ENCODE measurements at regions of chr16 and their contacts with region 1.

Region 1: GRCh38 chr16:30844671-30845449 is 49.0 kb downstream of the BCL7C start:
- DNase-seq: peak; percentile 69
- H3K27ac ChIP-seq: peak overlapping the region; percentile 3; the same call in 1 of the 2 replicates
- CTCF ChIP-seq: peak; percentile 86

Region 2: GRCh38 chr16:30761928-30762810 is 82.7 kb before region 1 on chr16 and contains the starts of genes CFAP119 and RNF40:
- CTCF ChIA-PET with region 1: no interaction called
- POLR2A ChIA-PET with region 1: no interaction called
- DNase-seq: peak; percentile 100
- H3K27ac ChIP-seq: peak within 1 kb of the TSS; percentile 83
- CTCF ChIP-seq: no peak

Region 3: GRCh38 chr16:30813821-30814189 is 31.1 kb before region 1 on chr16:
- CTCF ChIA-PET with region 1: interaction called, 10 read pairs
- POLR2A ChIA-PET with region 1: interaction called, 6 read pairs
- DNase-seq: no peak
- H3K27ac ChIP-seq: peak overlapping the region; percentile 82
- CTCF ChIP-seq: no peak

Region 4: GRCh38 chr16:30874821-30875717 is 30.2 kb after region 1 on chr16:
- CTCF ChIA-PET with region 1: interaction called, 11 read pairs
- POLR2A ChIA-PET with region 1: interaction called, 6 read pairs
- DNase-seq: peak; percentile 79
- H3K27ac ChIP-seq: peak overlapping the region; percentile 88
- CTCF ChIP-seq: no peak

Region 5: DNA sequence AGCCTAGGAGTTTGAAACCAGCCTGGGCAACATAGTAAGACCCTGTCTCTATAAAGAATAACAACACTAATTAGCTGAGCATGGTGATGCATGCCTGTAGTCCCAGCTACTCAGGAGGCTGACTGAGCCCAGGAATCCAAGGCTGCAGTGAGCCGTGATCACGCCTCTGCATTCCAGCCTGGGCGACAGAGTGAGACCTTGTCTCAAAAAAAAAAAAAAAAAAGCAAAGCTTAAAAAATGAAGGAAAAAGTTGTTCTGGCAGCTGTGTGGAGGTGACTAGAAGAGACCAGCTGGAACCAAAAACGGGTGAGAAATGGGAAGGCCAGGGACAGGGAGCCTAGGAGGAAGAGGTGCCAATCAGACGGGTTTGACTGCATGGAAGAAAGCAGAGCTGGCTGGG is 44.9 kb after region 1 on chr16:
- CTCF ChIA-PET with region 1: interaction called, 12 read pairs
- POLR2A ChIA-PET with region 1: no interaction called
- DNase-seq: no peak
- H3K27ac ChIP-seq: peak overlapping the region; percentile 26
- CTCF ChIP-seq: no peak

Region 6: GRCh38 chr16:30896889-30897733 is 52.3 kb after region 1 on chr16:
- CTCF ChIA-PET with region 1: interaction called, 47 read pairs
- POLR2A ChIA-PET with region 1: no interaction called
- DNase-seq: peak; percentile 82
- H3K27ac ChIP-seq: peak overlapping the region; percentile 99
- CTCF ChIP-seq: no peak

Region 7: DNA sequence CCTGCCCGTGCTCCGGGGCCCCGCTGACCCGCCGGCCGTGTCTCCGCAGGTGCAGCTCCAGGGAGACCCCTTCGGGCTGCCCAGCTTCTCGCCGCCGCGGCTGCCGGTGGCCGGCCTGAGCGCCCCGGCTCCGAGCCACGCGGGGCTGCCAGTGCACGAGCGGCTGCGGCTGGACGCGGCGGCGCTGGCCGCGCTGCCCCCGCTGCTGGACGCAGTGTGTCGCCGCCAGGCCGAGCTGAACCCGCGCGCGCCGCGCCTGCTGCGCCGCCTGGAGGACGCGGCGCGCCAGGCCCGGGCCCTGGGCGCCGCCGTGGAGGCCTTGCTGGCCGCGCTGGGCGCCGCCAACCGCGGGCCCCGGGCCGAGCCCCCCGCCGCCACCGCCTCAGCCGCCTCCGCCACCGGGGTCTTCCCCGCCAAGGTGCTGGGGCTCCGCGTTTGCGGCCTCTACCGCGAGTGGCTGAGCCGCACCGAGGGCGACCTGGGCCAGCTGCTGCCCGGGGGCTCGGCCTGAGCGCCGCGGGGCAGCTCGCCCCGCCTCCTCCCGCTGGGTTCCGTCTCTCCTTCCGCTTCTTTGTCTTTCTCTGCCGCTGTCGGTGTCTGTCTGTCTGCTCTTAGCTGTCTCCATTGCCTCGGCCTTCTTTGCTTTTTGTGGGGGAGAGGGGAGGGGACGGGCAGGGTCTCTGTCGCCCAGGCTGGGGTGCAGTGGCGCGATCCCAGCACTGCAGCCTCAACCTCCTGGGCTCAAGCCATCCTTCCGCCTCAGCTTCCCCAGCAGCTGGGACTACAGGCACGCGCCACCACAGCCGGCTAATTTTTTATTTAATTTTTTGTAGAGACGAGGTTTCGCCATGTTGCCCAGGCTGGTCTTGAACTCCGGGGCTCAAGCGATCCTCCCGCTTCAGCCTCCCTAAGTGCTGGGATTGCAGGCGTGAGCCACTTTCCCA is 57.4 kb after region 1 on chr16:
- CTCF ChIA-PET with region 1: interaction called, 47 read pairs
- POLR2A ChIA-PET with region 1: no interaction called
- DNase-seq: peak; percentile 57
- H3K27ac ChIP-seq: peak overlapping the region; percentile 84
- CTCF ChIP-seq: peak; percentile 92

Region 8: GRCh38 chr16:30941600-30942425 is 97.0 kb after region 1 on chr16:
- CTCF ChIA-PET with region 1: interaction called, 23 read pairs
- POLR2A ChIA-PET with region 1: no interaction called
- DNase-seq: peak; percentile 80
- H3K27ac ChIP-seq: peak overlapping the region; percentile 91
- CTCF ChIP-seq: peak; percentile 95